Right ventricle myocardium inferior (tissue), 1 donor: ENCODE measurements at regions of chr22 and their contacts with region 1.

Region 1: DNA sequence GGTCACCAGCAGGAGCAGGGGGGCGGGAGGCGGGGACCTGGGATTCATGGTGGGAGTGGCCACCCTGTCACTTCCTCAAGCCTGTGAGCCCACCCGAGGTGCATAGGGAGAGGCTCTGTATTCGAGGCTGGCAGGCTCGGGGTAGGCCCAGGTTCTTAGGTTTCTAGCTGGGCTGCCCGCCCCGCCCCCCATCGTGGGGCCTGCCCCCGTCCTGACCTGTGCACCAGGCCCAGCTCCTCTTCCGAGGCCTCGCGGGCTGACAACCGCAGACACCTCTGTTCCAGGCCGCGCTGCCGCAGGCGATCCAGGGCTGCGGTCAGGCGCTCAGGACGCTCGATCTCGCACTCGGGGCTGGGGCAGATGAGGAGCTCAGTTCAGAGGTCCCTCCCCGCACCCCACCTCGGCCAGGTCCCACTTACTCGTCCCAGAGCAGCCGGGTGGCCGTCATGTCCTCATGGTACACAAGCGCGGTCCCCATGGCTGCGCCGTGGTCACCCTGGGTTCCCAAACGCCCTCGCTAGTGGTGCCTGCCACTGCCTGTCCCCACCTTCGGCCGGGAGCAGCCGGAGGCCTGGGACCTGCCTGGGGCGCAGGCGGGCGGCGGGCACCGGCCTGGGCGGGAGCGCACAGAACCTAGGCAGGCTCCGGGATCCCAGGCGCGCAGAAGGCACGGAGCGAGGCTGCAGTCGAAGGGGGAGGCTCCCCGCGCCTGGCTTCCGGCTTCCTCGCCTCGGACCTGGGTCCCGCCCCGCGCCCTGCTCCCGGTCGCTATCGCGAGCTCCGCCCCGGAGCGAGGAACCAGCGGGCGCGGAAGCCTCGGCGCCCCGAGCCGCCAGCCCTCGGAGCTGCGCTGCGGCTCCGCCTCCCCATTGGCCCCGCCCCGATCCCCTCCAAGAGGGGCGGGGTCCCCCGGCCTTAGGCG is at the start of gene HDAC10:
- DNase-seq: peak; percentile 93
- ATAC-seq: peak; percentile 80
- total RNA-seq, gene HDAC10: 14.5 TPM

Region 2: DNA sequence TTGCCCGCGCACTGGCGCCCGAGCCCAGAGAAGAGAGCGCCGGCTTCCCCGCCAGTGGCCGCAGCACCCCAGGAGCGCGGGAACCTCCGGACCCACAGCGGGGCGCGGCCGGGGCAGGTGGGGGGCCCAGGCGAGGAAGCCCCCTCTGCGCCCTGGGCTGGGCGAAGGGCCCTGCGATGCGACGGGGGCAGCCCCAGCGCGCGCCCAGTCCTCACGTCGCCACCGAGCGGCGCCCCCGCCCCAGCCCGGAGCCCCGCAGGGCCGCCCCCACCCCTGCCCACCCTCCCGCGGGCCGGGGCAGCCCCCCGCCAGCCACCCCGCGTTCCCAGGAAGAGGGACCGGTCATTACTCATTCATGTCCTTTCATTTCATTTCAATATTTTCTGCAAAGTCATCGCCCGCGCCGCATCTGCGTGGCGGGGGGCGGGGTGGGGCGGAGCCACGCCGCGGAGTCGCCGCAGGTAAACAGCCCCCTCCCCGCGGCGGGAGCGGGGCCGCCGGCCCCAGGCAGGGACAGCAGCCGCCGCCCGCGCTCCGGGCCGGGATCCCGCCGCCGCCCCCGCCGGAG is 81.0 kb before region 1 on chr22:
- intact Hi-C with region 1: no loop called
- DNase-seq: peak; percentile 81
- ATAC-seq: no peak

Region 3: GRCh38 chr22:50341977-50342650 is 91.3 kb after region 1 on chr22:
- intact Hi-C with region 1: loop called (anchors 2 kb)
- DNase-seq: peak; percentile 91
- ATAC-seq: peak; percentile 85

Region 4: DNA sequence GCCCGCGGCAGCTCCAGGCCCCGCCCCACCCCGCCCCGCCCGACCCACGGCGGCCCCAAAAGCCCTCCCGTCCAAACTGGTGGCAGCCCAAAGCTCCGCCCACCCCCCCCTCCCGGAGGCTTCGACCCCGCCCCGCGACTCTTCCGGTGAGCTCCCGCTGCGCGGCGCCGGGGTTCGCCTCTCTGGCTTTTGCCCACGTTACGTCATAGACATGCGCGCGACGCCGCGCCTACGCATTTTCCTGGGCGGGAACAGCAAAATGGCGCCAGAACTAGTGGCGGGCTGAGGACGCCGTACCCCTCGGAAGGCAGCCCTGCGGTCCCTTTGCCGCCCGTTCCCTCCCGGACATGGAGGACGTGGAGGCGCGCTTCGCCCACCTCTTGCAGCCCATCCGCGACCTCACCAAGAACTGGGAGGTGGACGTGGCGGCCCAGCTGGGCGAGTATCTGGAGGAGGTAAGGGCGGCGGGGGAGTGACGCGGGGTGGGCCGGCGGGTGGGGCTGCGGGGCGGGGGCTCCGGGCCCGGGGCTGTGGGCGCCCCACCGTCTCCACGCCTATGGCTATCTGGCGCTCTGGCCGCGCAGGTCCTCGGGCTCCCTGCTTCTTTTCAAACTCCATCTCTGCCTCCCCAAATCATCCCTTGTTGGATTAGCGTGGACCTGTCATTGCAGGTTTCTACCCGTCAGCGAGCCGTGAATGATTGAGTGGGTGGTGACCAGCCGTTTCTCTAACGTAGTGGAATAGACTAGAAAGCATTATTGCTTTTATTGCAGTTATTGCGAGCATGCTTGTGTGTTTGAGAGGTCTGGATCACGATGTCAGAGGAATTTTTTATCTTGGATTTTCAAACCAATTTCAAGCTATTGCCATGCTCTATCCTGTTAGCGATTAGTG is 257.4 kb after region 1 on chr22 and contains the start of gene NCAPH2:
- intact Hi-C with region 1: loop called (anchors 5 kb)
- DNase-seq: peak; percentile 99
- ATAC-seq: peak; percentile 79
- total RNA-seq, gene NCAPH2: 26.7 TPM

Region 5: DNA sequence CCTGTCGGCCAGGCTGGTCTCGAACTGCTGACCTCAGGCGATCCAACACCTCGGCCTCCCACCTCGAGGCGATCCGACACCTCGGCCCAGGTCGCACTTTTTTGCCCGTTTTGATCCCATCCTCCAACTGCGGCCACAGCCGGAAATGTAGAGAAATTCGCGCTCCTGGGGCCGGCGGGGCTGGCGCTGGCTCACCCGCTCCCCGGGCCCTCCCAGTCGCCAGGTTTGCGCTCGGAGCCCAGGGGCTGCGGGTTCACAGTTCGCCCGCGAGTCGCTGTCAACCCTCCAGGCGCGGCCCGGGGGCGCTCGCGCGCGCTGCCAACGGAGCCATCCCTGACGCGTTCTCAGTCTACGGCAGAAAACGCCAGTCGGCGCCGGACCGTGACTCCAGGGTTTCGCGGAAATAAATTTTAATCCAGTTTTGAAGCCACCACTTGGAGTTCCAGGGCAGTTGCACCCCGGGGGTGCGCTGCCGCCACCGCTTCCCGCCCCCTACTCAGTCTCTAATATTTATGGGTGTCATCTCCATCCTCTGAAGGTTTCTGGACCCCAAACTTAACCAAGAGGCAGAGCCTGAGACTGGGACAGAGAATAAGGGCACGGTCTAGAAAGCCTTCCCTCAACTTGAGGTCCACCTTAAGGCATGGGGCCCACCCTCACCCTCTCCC is 293.4 kb after region 1 on chr22:
- intact Hi-C with region 1: no loop called
- DNase-seq: peak; percentile 91
- ATAC-seq: peak; percentile 66